Activated CD4-positive, alpha-beta T cell treated with anti-CD3 and anti-CD28 coated beads for 36 hours (primary cell): ENCODE measurements at regions of chr3 and their contacts with region 1.

Region 1: DNA sequence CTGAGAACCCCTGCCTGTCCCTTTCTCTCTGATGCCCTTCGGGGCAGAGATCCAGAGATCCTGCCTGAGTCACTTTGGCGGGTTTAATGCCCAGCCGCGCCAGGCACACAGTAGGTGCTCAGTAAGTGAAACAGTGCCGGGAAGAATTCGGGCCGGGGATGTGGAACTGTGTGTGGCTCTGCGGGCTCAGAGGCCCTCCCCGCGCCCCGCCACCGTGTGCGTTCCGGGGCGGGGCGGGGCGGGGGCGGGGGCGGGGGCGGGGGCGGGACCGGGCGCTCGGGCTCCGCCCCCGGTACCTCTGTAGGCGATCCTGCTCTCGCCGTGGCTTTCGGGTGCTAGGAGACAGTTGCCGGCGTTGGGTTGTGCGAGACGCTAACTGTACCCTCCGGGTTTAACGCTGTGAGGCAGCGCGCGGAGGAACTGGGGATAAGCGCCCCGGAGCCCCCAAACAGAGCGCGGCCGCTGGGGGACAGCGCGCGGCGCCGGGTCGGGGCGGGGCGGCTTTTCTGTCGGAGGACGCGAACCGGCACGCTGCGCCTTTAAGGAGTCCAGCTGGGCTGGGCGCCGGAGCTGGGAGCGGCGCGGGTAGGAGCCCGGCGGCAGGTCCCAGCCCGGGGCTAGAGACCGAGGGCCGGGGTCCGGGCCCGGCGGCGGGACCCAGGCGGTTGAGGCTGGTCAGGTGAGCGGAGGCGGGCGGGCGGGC is at the start of gene ABHD6:
- DNase-seq: peak; percentile 88
- ATAC-seq: peak; percentile 81
- H3K4me3 Mint-ChIP-seq: peak within 1 kb of the TSS; percentile 82
- H3K27ac Mint-ChIP-seq: peak within 1 kb of the TSS; percentile 71
- H3K4me1 Mint-ChIP-seq: peaks cover 10% of the 10 kb centered on the region
- H3K27me3 Mint-ChIP-seq: peaks cover 3% of the 10 kb centered on the region
- total RNA-seq, gene ABHD6: 3.0 to 3.5 TPM

Region 2: GRCh38 chr3:57597122-57597923 is 640.1 kb before region 1 on chr3 and contains the start of gene ARF4:
- CTCF ChIA-PET with region 1: no interaction called
- POLR2A ChIA-PET with region 1: no interaction called
- intact Hi-C with region 1: loop called in 1 of 2 experiments (anchors 2 kb)
- DNase-seq: peak; percentile 99
- ATAC-seq: peak; percentile 94
- H3K4me3 Mint-ChIP-seq: peak within 1 kb of the TSS; percentile 98
- H3K27ac Mint-ChIP-seq: peak within 1 kb of the TSS; percentile 99
- H3K4me1 Mint-ChIP-seq: peaks cover 30% of the 10 kb centered on the region
- H3K27me3 Mint-ChIP-seq: no peaks in the 10 kb centered on the region
- total RNA-seq, gene ARF4: 49.6 to 50.0 TPM

Region 3: GRCh38 chr3:58008140-58009025 is 229.0 kb before region 1 on chr3 and contains the start of gene FLNB:
- CTCF ChIA-PET with region 1: no interaction called
- POLR2A ChIA-PET with region 1: no interaction called
- intact Hi-C with region 1: loop called in 1 of 2 experiments (anchors 1 kb)
- DNase-seq: peak; percentile 91
- ATAC-seq: peak; percentile 80
- H3K4me3 Mint-ChIP-seq: peak within 1 kb of the TSS; percentile 88
- H3K27ac Mint-ChIP-seq: peak within 1 kb of the TSS; percentile 89
- H3K4me1 Mint-ChIP-seq: peaks cover 38% of the 10 kb centered on the region
- H3K27me3 Mint-ChIP-seq: no peaks in the 10 kb centered on the region
- total RNA-seq, gene FLNB: 25.4 to 29.1 TPM

Region 4: DNA sequence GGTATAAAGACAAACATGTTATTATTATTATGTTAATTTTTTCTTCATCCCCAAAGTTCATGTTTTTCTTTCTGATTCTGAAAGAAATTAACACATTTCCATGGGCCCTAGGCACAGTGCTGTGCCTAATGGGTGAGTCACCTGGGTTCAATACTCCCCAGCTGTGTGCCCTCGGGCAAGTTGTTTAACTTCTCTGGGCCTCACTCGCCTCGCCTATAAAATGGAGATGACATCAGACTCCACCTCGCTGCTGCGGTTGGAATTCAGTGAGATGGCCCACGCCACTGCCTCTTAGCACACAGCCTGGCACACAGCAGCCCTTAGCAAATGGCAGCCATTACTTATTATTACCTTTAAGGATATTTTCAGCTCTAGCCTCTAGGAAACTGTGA is 49.2 kb before region 1 on chr3:
- CTCF ChIA-PET with region 1: interaction called, 15 read pairs
- POLR2A ChIA-PET with region 1: no interaction called
- intact Hi-C with region 1: loop called in 1 of 2 experiments (anchors 5 kb)
- DNase-seq: no peak
- ATAC-seq: peak; percentile 63
- H3K4me3 Mint-ChIP-seq: no peak overlapping the region
- H3K27ac Mint-ChIP-seq: no peak overlapping the region
- H3K4me1 Mint-ChIP-seq: no peaks in the 10 kb centered on the region
- H3K27me3 Mint-ChIP-seq: no peaks in the 10 kb centered on the region

Region 5: GRCh38 chr3:58332575-58333188 is 95.3 kb after region 1 on chr3 and contains the start of gene PXK:
- CTCF ChIA-PET with region 1: no interaction called
- POLR2A ChIA-PET with region 1: no interaction called
- intact Hi-C with region 1: loop called in 1 of 2 experiments (anchors 1 kb)
- DNase-seq: peak; percentile 89
- ATAC-seq: peak; percentile 84
- H3K4me3 Mint-ChIP-seq: peak within 1 kb of the TSS; percentile 100
- H3K27ac Mint-ChIP-seq: peak within 1 kb of the TSS; percentile 96
- H3K4me1 Mint-ChIP-seq: peaks cover 30% of the 10 kb centered on the region
- H3K27me3 Mint-ChIP-seq: no peaks in the 10 kb centered on the region
- total RNA-seq, gene PXK: 35.2 to 50.7 TPM

Region 6: DNA sequence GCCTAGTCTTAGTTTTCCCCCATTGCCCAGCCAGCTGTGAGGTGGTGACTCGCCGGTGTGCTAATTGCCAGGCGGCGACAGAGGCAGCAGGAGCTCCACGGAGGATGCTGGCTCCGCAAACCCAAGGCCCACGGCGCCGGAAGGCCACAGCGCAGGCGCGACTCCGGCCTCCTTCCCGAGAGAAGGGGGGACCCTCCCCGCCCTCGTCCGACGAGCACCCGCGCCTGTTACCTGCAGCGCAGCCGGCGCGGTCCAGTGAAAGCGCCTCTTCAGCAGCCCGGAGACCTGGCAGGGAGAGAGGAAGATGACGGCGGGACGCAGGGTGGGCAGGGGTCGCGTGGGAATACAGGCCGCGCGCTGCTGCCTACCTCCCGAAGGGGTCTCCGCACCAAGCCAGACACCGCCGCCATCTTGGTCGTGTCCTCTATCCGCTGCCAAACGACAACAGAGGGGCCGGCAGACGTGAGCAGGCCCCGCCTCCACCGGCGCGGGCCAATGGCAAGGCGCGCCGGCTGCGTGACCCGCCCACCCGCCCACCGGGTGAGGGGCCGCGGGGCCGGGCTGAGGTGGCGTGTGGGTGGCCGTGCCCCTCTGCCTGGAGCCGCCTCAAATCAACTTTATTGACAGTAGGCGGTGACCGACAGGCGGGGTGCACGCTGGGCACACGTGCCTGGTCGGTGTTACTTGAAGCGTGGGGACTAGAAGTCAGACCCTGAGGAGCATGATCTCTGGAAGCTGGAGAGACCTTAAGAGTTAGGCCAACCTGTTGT is 196.2 kb after region 1 on chr3 and contains the start of gene PDHB:
- CTCF ChIA-PET with region 1: no interaction called
- POLR2A ChIA-PET with region 1: no interaction called
- intact Hi-C with region 1: loop called in 1 of 2 experiments (anchors 1 kb)
- DNase-seq: peak; percentile 93
- ATAC-seq: peak; percentile 96
- H3K4me3 Mint-ChIP-seq: peak within 1 kb of the TSS; percentile 85
- H3K27ac Mint-ChIP-seq: peak within 1 kb of the TSS; percentile 96
- H3K4me1 Mint-ChIP-seq: peaks cover 24% of the 10 kb centered on the region
- H3K27me3 Mint-ChIP-seq: no peaks in the 10 kb centered on the region
- total RNA-seq, gene PDHB: 42.7 to 50.7 TPM

Region 7: GRCh38 chr3:58532794-58533220 is 295.4 kb after region 1 on chr3:
- CTCF ChIA-PET with region 1: no interaction called
- POLR2A ChIA-PET with region 1: no interaction called
- intact Hi-C with region 1: loop called in 1 of 2 experiments (anchors 2 kb)
- DNase-seq: peak; percentile 92
- ATAC-seq: peak; percentile 97
- H3K4me3 Mint-ChIP-seq: no peak overlapping the region
- H3K27ac Mint-ChIP-seq: peak overlapping the region; percentile 67
- H3K4me1 Mint-ChIP-seq: peaks cover 13% of the 10 kb centered on the region
- H3K27me3 Mint-ChIP-seq: no peaks in the 10 kb centered on the region